CD8-positive, alpha-beta T cell (primary cell): ENCODE measurements at regions of chr17 and their contacts with region 1.

Region 1: GRCh38 chr17:59892924-59893676 is at the starts of genes RPS6KB1 and TUBD1:
- DNase-seq: peak; percentile 94 to 100 (median 97)
- ATAC-seq: peak; percentile 91
- H3K4me3 ChIP-seq: peak within 1 kb of the TSS; percentile 66 to 82
- H3K4me3 Mint-ChIP-seq: peak within 1 kb of the TSS; percentile 100
- H3K27ac ChIP-seq: peak within 1 kb of the TSS; percentile 89 to 93
- H3K27ac Mint-ChIP-seq: peak within 1 kb of the TSS; percentile 100
- H3K4me1 ChIP-seq: peaks cover 37% of the 10 kb centered on the region
- H3K4me1 Mint-ChIP-seq: peaks cover 56% of the 10 kb centered on the region
- H3K27me3 ChIP-seq: no peaks in the 10 kb centered on the region
- H3K27me3 Mint-ChIP-seq: no peaks in the 10 kb centered on the region
- CTCF ChIP-seq: no peak
- total RNA-seq, gene RPS6KB1: 153 to 171 TPM
- total RNA-seq, gene TUBD1: 9.7 to 11.0 TPM

Region 2: DNA sequence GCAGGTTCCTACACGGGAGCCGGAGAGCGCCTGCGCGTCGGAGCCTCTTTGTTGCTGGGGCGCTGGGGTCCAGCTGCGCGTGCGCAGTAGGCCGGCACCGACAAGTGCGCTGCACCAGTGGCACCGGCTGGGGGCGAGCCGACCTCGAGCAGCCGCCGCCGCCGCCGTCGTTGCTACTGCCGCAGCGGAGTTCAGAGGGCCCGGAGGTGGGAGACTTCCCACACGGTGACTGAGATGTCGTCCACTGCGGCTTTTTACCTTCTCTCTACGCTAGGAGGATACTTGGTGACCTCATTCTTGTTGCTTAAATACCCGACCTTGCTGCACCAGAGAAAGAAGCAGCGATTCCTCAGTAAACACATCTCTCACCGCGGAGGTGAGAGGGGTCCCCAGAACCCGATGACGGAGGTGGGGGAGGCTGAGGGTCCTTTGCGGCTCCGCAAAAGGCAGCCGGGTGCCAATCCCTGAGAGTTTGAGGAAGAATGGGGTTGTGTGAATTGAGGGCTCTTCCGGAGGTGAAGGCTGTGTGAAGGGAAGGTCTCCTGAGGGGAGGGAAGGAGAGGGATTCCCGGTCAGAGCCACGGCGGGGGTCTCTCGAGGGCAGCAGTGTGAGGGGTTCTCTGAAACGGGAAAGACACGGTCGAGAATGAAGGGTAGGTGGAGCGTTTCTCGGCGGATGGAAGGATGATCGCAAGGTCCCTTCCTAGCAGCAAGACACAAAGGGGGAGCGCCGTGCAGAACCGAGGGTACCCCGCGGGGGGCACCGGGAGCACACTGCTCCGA is 672.5 kb before region 1 on chr17 and contains the start of gene GDPD1:
- CTCF ChIA-PET with region 1: no interaction called
- POLR2A ChIA-PET with region 1: no interaction called
- intact Hi-C with region 1: loop called in 1 of 2 experiments (anchors 10 kb)
- DNase-seq: peak; percentile 94 to 99 (median 97)
- ATAC-seq: peak; percentile 96
- H3K4me3 ChIP-seq: peak within 1 kb of the TSS; percentile 97 to 100
- H3K4me3 Mint-ChIP-seq: peak within 1 kb of the TSS; percentile 98
- H3K27ac ChIP-seq: peak within 1 kb of the TSS; percentile 91 to 92
- H3K27ac Mint-ChIP-seq: peak within 1 kb of the TSS; percentile 99
- H3K4me1 ChIP-seq: peaks cover 4% of the 10 kb centered on the region
- H3K4me1 Mint-ChIP-seq: peaks cover 13% of the 10 kb centered on the region
- H3K27me3 ChIP-seq: no peaks in the 10 kb centered on the region
- H3K27me3 Mint-ChIP-seq: no peaks in the 10 kb centered on the region
- CTCF ChIP-seq: peak; percentile 71
- total RNA-seq, gene GDPD1: 1.1 to 1.8 TPM

Region 3: GRCh38 chr17:59619293-59620063 is 273.6 kb before region 1 on chr17 and contains the start of gene CLTC:
- CTCF ChIA-PET with region 1: no interaction called
- POLR2A ChIA-PET with region 1: no interaction called
- intact Hi-C with region 1: loop called (anchors 1 to 2 kb)
- DNase-seq: peak; percentile 83 to 98 (median 90)
- ATAC-seq: peak; percentile 82
- H3K4me3 ChIP-seq: peak within 1 kb of the TSS; percentile 98 to 99
- H3K4me3 Mint-ChIP-seq: peak within 1 kb of the TSS; percentile 96
- H3K27ac ChIP-seq: peak within 1 kb of the TSS; percentile 91 to 99
- H3K27ac Mint-ChIP-seq: peak within 1 kb of the TSS; percentile 98
- H3K4me1 ChIP-seq: peaks cover 37% of the 10 kb centered on the region
- H3K4me1 Mint-ChIP-seq: peaks cover 48% of the 10 kb centered on the region
- H3K27me3 ChIP-seq: no peaks in the 10 kb centered on the region
- H3K27me3 Mint-ChIP-seq: no peaks in the 10 kb centered on the region
- CTCF ChIP-seq: no peak
- total RNA-seq, gene CLTC: 73.4 to 86.0 TPM

Region 4: DNA sequence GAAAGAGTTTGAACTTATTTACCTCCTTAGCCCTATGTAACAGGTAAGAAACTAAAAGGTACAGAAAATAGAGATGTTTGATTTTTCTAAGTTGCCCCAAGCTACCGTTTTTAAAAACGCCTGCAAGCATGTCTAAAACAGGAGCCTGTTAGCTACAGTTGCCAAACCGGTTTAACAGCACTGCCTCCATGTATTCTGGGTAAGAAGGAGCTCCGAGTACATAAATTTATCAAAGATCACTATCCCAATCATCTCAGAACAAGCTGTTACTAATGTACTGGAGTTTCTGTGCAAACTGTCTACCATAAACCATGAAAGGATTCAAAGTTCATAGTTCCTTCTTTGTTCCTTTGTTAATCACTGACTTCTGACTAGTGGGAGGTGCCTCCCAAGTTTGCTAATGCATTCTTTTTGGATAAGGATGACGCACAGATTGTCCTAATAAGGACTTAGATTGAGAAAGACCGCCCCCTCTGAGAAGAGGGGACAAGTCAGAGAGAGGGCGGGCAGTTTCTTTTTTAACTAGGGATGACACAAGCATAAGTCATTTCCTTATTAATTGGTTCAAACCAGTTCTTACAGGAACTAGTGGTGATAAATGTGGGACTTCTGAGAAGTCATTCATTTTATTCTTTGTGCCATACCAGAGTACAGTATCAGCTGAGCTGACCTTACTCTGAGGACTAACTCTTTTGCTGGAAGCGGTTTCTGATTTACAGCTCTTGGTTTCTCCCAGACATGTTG is 55.6 kb before region 1 on chr17:
- CTCF ChIA-PET with region 1: no interaction called
- POLR2A ChIA-PET with region 1: interaction called, 3 read pairs
- intact Hi-C with region 1: loop called (anchors 5 kb)
- DNase-seq: peak in 7 of 9 experiments; percentile 28 to 94 (median 57)
- ATAC-seq: peak; percentile 93
- H3K4me3 ChIP-seq: peak overlapping the region; percentile 14 to 64
- H3K4me3 Mint-ChIP-seq: peak overlapping the region; percentile 92
- H3K27ac ChIP-seq: peak overlapping the region; percentile 69 to 94
- H3K27ac Mint-ChIP-seq: peak overlapping the region; percentile 93
- H3K4me1 ChIP-seq: peaks cover 24% of the 10 kb centered on the region
- H3K4me1 Mint-ChIP-seq: peaks cover 48% of the 10 kb centered on the region
- H3K27me3 ChIP-seq: no peaks in the 10 kb centered on the region
- H3K27me3 Mint-ChIP-seq: no peaks in the 10 kb centered on the region
- CTCF ChIP-seq: no peak

Region 5: DNA sequence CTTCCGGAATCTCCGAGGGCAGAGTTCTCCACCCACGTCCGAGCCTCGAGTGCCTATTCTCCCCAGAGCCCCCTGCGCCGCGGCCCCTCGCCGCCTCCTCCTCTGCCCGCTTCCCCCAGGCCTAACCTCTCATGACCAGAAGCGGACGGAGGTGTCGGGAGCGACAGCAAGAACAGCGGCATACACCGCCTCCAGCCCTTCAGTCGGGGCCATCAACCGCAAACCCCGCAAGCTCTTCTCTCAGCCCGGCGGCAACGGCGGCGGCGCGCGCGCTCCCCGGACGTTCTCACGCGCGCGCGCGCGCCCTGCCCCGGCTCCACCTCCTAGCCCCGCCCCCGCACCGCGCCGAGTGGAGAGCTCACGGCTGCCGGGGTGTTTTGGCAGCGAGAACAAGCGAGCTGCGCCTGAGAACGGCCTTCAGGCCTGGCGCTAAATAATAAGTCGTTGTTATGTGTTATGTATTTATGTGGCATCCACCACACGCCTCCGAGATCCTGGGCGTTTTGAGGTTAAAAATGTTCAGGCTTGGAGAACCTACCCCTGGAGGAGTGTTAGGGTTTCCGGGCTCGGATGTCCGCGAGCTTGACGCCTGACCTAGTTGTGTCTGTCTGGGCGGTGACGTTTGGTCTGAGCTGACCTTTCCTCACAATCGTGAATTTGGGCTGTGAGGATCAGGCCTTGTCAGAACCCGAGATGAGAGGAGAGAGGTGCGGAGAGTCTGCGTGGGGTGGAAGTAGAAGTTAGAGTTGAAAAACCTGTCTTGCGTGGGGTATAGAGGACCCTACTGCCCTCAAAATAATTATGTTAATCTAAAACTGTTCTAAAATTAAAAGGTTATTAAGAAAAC is 71.6 kb after region 1 on chr17 and contains the start of gene RNFT1:
- CTCF ChIA-PET with region 1: no interaction called
- POLR2A ChIA-PET with region 1: interaction called, 9 read pairs
- intact Hi-C with region 1: loop called in 1 of 2 experiments (anchors 2 kb)
- DNase-seq: peak; percentile 82 to 95 (median 91)
- ATAC-seq: peak; percentile 86
- H3K4me3 ChIP-seq: peak within 1 kb of the TSS; percentile 89 to 100
- H3K4me3 Mint-ChIP-seq: peak within 1 kb of the TSS; percentile 95
- H3K27ac ChIP-seq: peak within 1 kb of the TSS; percentile 84 to 93
- H3K27ac Mint-ChIP-seq: peak within 1 kb of the TSS; percentile 97
- H3K4me1 ChIP-seq: peaks cover 22% of the 10 kb centered on the region
- H3K4me1 Mint-ChIP-seq: peaks cover 24% of the 10 kb centered on the region
- H3K27me3 ChIP-seq: no peaks in the 10 kb centered on the region
- H3K27me3 Mint-ChIP-seq: no peaks in the 10 kb centered on the region
- CTCF ChIP-seq: no peak
- total RNA-seq, gene RNFT1: 21.2 to 26.6 TPM